Mucosa of descending colon (tissue), 3 donors: ENCODE measurements at regions of chr3 and their contacts with region 1.

Region 1: DNA sequence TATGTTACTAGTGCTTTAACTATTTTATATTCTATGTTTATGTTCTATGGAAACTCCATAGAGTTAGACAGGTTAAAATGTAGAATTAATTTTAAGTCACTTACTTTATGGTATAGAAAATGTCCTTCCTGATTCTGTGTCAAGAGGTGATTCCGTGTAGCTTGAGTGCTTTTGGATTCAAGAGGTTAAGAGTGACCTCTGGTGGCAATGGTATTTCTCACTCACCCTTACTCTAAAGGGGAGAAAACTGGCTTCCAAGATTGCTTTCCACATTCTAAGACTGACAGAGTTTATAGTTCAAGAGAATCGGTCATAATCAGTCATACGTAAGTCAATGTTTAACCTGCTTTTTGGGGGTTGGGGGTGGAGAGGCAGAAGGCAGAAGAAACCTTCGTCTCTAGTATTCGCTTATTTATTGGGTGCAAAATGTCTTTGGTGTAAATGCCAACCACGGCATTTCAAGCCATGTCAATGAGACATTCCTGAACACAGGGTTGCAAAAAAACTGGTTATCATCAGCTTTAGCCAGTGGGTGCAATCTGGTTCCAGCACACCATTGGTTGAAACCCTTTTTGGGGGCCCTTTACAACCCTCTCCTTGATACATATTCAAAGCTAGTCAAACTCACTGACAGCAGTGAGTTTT is 92.0 kb upstream of the VGLL3 start:
- DNase-seq: peak in 1 of 3 donors; percentile 57
- ATAC-seq: peak; percentile 69
- H3K4me3 ChIP-seq: no peak overlapping the region
- H3K4me1 ChIP-seq: no peaks in the 10 kb centered on the region
- CTCF ChIP-seq: no peak

Region 2: DNA sequence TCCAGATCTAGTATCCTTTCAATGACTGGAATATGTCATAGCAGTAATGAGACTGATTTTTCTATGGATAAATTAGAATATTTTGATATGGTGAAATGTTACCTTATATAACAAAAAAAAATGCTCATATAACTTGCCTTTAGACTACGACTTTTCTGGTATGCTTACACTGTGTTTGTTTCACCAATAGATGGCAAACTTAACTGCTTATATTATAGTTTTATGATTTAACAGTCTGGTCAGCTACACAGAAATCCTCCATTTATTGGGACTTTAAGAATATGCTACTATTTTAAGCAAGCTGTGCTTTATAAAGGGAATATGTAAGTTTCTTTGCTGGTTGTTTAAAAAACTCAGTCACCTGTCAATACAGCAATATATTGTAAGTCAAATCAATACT is 297.5 kb before region 1 on chr3:
- intact Hi-C with region 1: loop called in 1 of 2 experiments (anchors 10 kb)
- DNase-seq: no peak
- ATAC-seq: no peak
- H3K4me3 ChIP-seq: no peak overlapping the region
- H3K4me1 ChIP-seq: no peaks in the 10 kb centered on the region
- CTCF ChIP-seq: no peak

Region 3: DNA sequence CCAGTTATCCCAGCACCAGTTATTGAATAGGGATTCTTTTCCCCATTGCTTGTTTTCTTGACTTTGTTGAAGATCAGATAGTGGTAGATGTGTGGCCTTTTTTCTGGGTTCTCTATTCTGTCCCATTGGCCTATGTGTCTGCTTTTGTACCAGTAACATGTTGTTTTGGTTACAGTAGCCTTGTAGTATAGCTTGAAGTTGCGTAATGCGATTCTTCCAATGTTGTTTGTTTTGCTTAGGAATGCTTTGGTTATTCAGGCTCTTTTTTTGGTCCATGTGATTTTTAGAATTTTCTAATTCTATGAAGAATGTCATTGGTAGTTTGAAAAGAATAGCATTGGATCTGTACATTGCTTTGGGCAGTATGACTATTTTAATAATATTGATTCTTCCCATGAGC is 49.9 kb after region 1 on chr3:
- intact Hi-C with region 1: no loop called
- DNase-seq: no peak
- ATAC-seq: no peak
- H3K4me3 ChIP-seq: no peak overlapping the region
- H3K4me1 ChIP-seq: no peaks in the 10 kb centered on the region
- CTCF ChIP-seq: no peak